Naive thymus-derived CD4-positive, alpha-beta T cell (primary cell): ENCODE measurements at regions of chr18 and their contacts with region 1.

Region 1: DNA sequence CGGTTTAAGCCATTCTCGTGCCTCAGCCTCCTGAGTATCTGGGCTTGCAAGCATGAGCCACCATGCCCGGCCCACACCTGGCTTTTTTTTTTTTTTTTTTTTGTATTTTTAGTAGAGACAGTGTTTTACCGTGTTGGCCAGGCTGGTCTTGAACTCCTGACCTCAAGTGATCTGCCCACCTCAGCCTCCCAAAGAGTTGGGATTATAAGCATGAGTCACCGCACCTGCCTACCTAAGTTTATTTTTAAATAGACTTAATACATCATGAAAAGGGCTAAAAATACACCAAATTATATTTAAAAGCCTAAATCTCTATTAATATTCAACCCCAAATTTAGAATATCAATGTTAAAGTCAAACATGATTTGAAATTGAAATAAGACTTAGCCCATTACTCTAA is 250.8 kb upstream of the MC4R start:
- DNase-seq: no peak
- ATAC-seq: no peak
- H3K4me3 ChIP-seq: no peak overlapping the region
- H3K4me3 Mint-ChIP-seq: no peak overlapping the region
- H3K27ac ChIP-seq: no peak overlapping the region
- H3K27ac Mint-ChIP-seq: no peak overlapping the region
- H3K4me1 ChIP-seq: no peaks in the 10 kb centered on the region
- H3K4me1 Mint-ChIP-seq: no peaks in the 10 kb centered on the region
- H3K27me3 ChIP-seq: no peaks in the 10 kb centered on the region
- H3K27me3 Mint-ChIP-seq: no peaks in the 10 kb centered on the region

Region 2: GRCh38 chr18:60493066-60493465 is 130.3 kb before region 1 on chr18:
- CTCF ChIA-PET with region 1: no interaction called
- POLR2A ChIA-PET with region 1: no interaction called
- intact Hi-C with region 1: no loop called
- DNase-seq: no peak
- ATAC-seq: no peak
- H3K4me3 ChIP-seq: no peak overlapping the region
- H3K4me3 Mint-ChIP-seq: no peak overlapping the region
- H3K27ac ChIP-seq: no peak overlapping the region
- H3K27ac Mint-ChIP-seq: no peak overlapping the region
- H3K4me1 ChIP-seq: no peaks in the 10 kb centered on the region
- H3K4me1 Mint-ChIP-seq: no peaks in the 10 kb centered on the region
- H3K27me3 ChIP-seq: no peaks in the 10 kb centered on the region
- H3K27me3 Mint-ChIP-seq: no peaks in the 10 kb centered on the region

Region 3: GRCh38 chr18:60676815-60677214 is 53.5 kb after region 1 on chr18:
- CTCF ChIA-PET with region 1: no interaction called
- POLR2A ChIA-PET with region 1: no interaction called
- intact Hi-C with region 1: loop called in 1 of 2 experiments (anchors 10 kb)
- DNase-seq: no peak
- ATAC-seq: no peak
- H3K4me3 ChIP-seq: no peak overlapping the region
- H3K4me3 Mint-ChIP-seq: no peak overlapping the region
- H3K27ac ChIP-seq: no peak overlapping the region
- H3K27ac Mint-ChIP-seq: no peak overlapping the region
- H3K4me1 ChIP-seq: no peaks in the 10 kb centered on the region
- H3K4me1 Mint-ChIP-seq: no peaks in the 10 kb centered on the region
- H3K27me3 ChIP-seq: no peaks in the 10 kb centered on the region
- H3K27me3 Mint-ChIP-seq: no peaks in the 10 kb centered on the region

Region 4: GRCh38 chr18:61261870-61262269 is 638.5 kb after region 1 on chr18:
- CTCF ChIA-PET with region 1: no interaction called
- POLR2A ChIA-PET with region 1: no interaction called
- intact Hi-C with region 1: no loop called
- DNase-seq: no peak
- ATAC-seq: no peak
- H3K4me3 ChIP-seq: no peak overlapping the region
- H3K4me3 Mint-ChIP-seq: no peak overlapping the region
- H3K27ac ChIP-seq: no peak overlapping the region
- H3K27ac Mint-ChIP-seq: no peak overlapping the region
- H3K4me1 ChIP-seq: no peaks in the 10 kb centered on the region
- H3K4me1 Mint-ChIP-seq: no peaks in the 10 kb centered on the region
- H3K27me3 ChIP-seq: no peaks in the 10 kb centered on the region
- H3K27me3 Mint-ChIP-seq: no peaks in the 10 kb centered on the region